ENCODE measurements at regions of chr1 and their contacts with region 1.

Region 1: GRCh38 chr1:169201084-169201619 is 94.7 kb downstream of the ATP1B1 start:
- DNase-seq: no peak
- ATAC-seq: no peak
- H3K4me3 ChIP-seq: no peak overlapping the region
- H3K27ac ChIP-seq: no peak overlapping the region
- H3K4me1 ChIP-seq: no peaks in the 10 kb centered on the region
- H3K27me3 ChIP-seq: no peaks in the 10 kb centered on the region
- CTCF ChIP-seq: no peak

Region 2: GRCh38 chr1:169217636-169218035 is 16.5 kb after region 1 on chr1:
- intact Hi-C with region 1: no loop called
- DNase-seq: no peak
- ATAC-seq: no peak
- H3K4me3 ChIP-seq: no peak overlapping the region
- H3K27ac ChIP-seq: no peak overlapping the region
- H3K4me1 ChIP-seq: no peaks in the 10 kb centered on the region
- H3K27me3 ChIP-seq: no peaks in the 10 kb centered on the region
- CTCF ChIP-seq: no peak

Region 3: DNA sequence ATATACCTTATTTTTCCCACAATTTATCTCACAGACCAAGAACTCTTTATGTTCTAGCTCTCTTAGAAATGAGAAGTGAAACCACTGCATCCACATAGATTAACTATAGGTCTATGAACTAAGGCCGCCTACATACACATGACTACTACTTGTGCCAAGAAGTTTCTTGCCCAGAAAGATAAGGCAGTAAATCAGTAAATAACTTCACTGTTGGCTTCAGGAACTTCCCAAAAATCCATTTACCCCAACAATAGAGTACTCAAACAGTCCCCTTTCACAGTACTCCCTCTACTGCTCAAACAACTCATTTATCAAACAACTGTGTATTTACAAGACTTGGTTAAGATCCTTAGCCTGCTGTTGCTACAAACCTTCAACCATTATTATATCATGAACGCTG is 69.9 kb after region 1 on chr1:
- intact Hi-C with region 1: no loop called
- DNase-seq: no peak
- ATAC-seq: peak in 1 of 4 donors; percentile 39
- H3K4me3 ChIP-seq: no peak overlapping the region
- H3K27ac ChIP-seq: no peak overlapping the region
- H3K4me1 ChIP-seq: peaks cover 6% of the 10 kb centered on the region
- H3K27me3 ChIP-seq: no peaks in the 10 kb centered on the region
- CTCF ChIP-seq: no peak

Region 4: GRCh38 chr1:170503691-170504090 is 1302.5 kb after region 1 on chr1:
- intact Hi-C with region 1: loop called in 1 of 2 experiments (anchors 10 kb)
- DNase-seq: no peak
- ATAC-seq: no peak
- H3K4me3 ChIP-seq: no peak overlapping the region
- H3K27ac ChIP-seq: no peak overlapping the region
- H3K4me1 ChIP-seq: no peaks in the 10 kb centered on the region
- H3K27me3 ChIP-seq: no peaks in the 10 kb centered on the region
- CTCF ChIP-seq: no peak